ENCODE measurements at regions of chr21 and their contacts with region 1.

Region 1: DNA sequence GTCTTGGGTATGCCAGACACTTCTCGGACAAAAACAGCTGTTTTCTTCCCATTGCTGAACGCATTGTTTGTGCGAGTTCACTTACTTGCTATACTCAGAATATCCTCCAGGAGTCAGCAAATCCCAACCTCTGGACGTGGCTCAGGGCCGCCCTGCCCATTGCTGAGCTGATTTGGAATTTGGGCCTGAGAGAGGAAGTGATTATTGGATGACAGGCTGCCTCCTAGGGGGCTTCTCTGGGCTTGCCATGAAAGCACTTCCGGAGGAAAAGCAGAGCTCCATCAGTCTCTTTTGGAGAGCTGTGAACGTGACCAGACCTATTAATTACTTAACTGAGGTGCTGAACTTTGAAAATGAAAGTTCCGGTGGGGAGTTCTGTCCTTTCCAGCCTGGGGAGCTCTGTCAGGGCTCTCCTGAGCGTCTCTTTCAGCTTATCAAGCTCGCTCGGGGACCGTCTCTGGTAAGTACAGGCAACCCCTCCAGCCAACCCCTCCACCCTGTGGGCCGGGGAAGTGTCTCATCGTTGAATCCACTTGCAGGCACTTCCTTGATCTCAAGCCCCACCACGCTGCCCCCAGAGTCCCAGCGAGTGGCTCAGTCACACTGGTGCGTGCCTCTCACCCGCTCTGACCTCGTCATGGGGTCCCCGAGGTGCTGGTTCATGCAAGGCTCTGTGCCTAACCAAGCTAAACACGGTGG is 76.9 kb downstream of the CLIC6 start:
- DNase-seq: peak; percentile 61 to 74
- H3K4me3 ChIP-seq: peak overlapping the region in 2 of 3 donors; percentile 1 to 31
- H3K27ac ChIP-seq: peak overlapping the region; percentile 45 to 63
- H3K4me1 ChIP-seq: peaks cover 3 to 11% of the 10 kb centered on the region in 2 donors
- H3K27me3 ChIP-seq: no peaks in the 10 kb centered on the region
- CTCF ChIP-seq: peak; percentile 90 to 97 (median 93)
- POLR2A ChIP-seq: no peak

Region 2: GRCh38 chr21:35840197-35840799 is 1094.6 kb after region 1 on chr21:
- intact Hi-C with region 1: loop called (anchors 10 kb)
- DNase-seq: peak in 1 of 2 donors; percentile 51
- H3K4me3 ChIP-seq: no peak overlapping the region
- H3K27ac ChIP-seq: no peak overlapping the region
- H3K4me1 ChIP-seq: peaks cover 0 to 6% of the 10 kb centered on the region in 2 donors
- H3K27me3 ChIP-seq: no peaks in the 10 kb centered on the region
- CTCF ChIP-seq: peak; percentile 31 to 85 (median 73)
- POLR2A ChIP-seq: no peak

Measured in breast epithelium (tissue), 4 donors.